ENCODE measurements at regions of chr11 and their contacts with region 1.

Region 1: DNA sequence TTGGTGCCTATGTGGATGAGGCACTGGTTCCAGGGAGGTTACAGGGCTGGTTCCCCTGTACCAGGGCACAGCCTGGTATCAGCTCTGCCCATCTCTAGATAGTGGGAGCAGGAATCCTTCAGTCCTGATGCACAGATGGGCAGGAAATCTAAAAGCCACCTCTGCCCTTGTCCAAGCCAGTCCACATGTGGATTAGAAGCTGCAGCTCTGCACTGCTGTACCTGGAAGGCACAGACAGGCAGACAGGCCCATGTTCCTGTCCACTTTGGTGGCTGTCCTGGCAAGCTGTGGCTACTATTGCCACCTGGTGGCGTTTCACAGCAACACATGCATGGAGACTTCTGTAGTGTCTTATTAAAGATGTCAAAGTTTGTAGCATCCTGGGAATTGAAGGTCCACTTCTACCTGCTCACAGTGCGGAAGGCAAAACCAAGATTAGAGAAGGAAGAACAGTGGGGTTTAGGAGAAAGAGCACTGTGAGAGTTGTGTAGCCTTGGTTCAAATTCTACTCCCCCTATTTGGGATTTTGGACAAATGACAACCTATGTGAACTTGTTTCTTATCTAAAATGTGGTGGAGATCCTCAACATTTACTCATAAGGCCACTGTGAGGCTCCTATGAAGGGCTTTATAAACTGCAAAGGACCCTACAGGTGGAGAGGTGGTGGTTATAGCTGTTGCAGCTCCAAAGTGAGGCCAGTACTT is 30.1 kb downstream of the NAV2 start:
- DNase-seq: peak; percentile 77
- H3K4me3 ChIP-seq: no peak overlapping the region
- H3K27ac ChIP-seq: peak overlapping the region; percentile 2
- H3K4me1 ChIP-seq: peaks cover 47% of the 10 kb centered on the region
- H3K27me3 ChIP-seq: no peaks in the 10 kb centered on the region
- CTCF ChIP-seq: peak; percentile 95

Region 2: DNA sequence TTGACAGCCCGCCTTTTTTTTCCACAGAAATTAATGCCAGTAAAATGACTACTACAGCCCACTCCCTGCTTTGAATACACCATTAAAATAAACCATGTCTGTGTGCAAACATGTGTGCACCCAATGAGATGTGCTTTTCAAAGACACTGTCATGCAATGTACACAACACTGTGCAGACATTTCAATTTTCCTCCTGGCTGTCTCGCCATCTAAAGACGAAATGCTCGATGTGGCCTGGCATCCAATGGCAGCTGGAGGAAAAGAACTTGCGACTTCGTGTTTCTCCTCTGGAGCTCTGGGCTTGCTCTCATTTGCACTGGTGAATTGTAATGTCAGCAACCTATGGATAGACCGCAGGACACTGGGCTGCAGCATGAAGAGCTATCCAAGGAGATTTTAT is 177.1 kb before region 1 on chr11:
- intact Hi-C with region 1: loop called (anchors 2 kb)
- DNase-seq: no peak
- H3K4me3 ChIP-seq: no peak overlapping the region
- H3K27ac ChIP-seq: no peak overlapping the region
- H3K4me1 ChIP-seq: peaks cover 22% of the 10 kb centered on the region
- H3K27me3 ChIP-seq: no peaks in the 10 kb centered on the region
- CTCF ChIP-seq: no peak

Measured in left ventricle myocardium inferior (tissue), 1 donor.